ENCODE measurements at regions of chr21 and their contacts with region 1.

Region 1: DNA sequence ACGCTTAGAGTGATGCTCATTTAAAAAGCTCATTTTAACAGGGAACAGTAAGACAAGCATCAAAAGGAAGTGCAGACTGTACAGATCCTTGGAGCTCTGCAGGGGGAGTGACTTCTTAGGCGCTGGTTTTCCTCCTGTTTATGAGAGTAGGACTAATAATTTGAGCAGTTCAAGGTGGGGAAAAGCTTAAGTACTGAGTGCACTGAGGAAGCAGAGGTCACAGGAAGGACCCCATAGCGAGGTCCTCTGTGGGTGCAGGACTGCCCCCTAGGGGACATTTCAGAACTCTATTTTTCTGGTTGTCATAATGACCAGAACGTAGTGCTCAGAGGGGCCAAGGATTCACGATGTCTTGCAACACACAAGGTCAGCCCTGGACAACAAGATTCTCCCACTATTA is 112.1 kb downstream of the HLCS start:
- DNase-seq: peak; percentile 33
- H3K4me3 Mint-ChIP-seq: no peak overlapping the region
- H3K27ac Mint-ChIP-seq: no peak overlapping the region
- H3K4me1 Mint-ChIP-seq: peaks cover 35% of the 10 kb centered on the region
- H3K27me3 Mint-ChIP-seq: no peaks in the 10 kb centered on the region

Region 2: GRCh38 chr21:36706951-36707762 is 147.2 kb before region 1 on chr21:
- CTCF ChIA-PET with region 1: no interaction called
- POLR2A ChIA-PET with region 1: no interaction called
- intact Hi-C with region 1: loop called (anchors 5 kb)
- DNase-seq: peak; percentile 24
- H3K4me3 Mint-ChIP-seq: no peak overlapping the region
- H3K27ac Mint-ChIP-seq: no peak overlapping the region
- H3K4me1 Mint-ChIP-seq: peaks cover 39% of the 10 kb centered on the region
- H3K27me3 Mint-ChIP-seq: peaks cover 73% of the 10 kb centered on the region

Region 3: DNA sequence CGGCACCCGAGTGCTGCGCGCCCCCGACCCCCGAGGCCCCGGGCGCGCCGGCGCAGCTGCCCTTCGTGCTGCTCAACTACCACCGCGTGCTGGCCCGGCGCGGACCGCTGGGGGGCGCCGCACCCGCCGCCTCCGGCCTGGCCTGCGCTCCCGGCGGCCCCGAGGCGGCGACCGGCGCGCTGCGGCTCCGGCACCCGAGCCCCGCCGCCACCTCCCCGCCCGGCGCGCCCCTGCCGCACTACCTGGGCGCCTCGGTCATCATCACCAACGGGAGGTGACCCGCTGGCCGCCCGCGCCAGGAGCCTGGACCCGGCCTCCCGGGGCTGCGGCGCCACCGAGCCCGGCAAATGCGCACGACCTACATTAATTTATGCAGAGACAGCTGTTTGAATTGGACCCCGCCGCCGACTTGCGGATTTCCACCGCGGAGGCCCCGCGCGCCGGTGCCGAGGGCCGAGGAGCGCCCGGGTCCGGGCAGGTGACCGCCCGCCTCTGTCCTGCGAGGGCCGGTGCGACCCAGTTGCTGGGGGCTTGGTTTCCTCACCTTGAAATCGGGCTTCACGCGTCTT is 106.5 kb before region 1 on chr21:
- CTCF ChIA-PET with region 1: interaction called, 7 read pairs
- POLR2A ChIA-PET with region 1: no interaction called
- intact Hi-C with region 1: loop called (anchors 2 kb)
- DNase-seq: peak; percentile 68
- H3K4me3 Mint-ChIP-seq: peak overlapping the region; percentile 63
- H3K27ac Mint-ChIP-seq: no peak overlapping the region
- H3K4me1 Mint-ChIP-seq: peaks cover 15% of the 10 kb centered on the region
- H3K27me3 Mint-ChIP-seq: peaks cover 45% of the 10 kb centered on the region

Region 4: GRCh38 chr21:36902796-36903195 is 48.4 kb after region 1 on chr21:
- CTCF ChIA-PET with region 1: no interaction called
- POLR2A ChIA-PET with region 1: interaction called, 3 read pairs
- intact Hi-C with region 1: loop called (anchors 2 kb)
- DNase-seq: peak; percentile 40
- H3K4me3 Mint-ChIP-seq: no peak overlapping the region
- H3K27ac Mint-ChIP-seq: peak overlapping the region; percentile 93
- H3K4me1 Mint-ChIP-seq: peaks cover 43% of the 10 kb centered on the region
- H3K27me3 Mint-ChIP-seq: no peaks in the 10 kb centered on the region

Measured in activated CD4-positive, alpha-beta memory T cell treated with anti-CD3 and anti-CD28 coated beads for 36 hours (primary cell).